Activated naive CD8-positive, alpha-beta T cell treated with anti-CD3 and anti-CD28 coated beads, Interleukin-2, amount 10 ng/mL, durations not matched to agents 7 days and 5 days (primary cell): ENCODE measurements at regions of chr1 and their contacts with region 1.

Region 1: DNA sequence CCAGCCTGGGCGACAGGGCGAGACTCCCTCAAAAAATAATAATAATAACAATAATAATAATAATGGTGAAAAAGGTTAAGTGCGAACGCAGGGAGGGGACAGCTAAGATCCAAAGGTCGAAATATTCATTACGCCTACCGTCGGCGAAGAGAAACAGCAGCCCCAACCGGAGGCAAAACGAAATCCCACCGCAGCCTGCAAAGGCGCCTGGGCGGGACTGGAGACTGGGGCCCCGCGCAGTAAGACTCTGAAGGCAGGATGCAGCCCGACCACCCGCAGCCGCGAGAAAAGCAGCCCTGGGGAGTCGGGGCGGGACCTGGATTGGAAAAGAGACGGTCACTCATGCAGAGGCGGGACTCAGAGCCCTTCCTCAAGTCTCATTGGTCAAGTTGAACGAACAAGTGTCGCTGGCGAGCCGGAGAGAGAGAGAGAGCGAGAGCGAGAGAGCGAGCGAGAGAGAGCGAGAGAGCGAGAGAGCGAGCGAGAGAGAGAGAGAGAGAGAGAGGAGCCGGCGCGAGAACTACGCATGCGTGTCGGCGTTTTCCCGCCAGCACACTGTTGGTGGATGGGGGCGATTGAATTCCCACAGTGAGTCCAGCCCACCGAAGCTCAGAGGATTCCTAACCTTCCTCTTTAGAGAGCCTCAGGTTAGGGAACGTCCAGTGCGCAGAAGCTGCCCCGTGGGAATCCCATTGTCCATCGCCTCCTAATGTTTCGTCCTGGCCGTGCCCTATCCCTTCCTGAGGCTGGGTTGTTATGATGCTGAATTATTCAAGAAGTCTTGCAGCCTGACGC is 10.7 kb downstream of the ENTREP3 start:
- DNase-seq: peak; percentile 96
- ATAC-seq: peak; percentile 97
- H3K4me3 Mint-ChIP-seq: peak overlapping the region; percentile 85
- H3K27ac Mint-ChIP-seq: peak overlapping the region; percentile 95
- H3K4me1 Mint-ChIP-seq: peaks cover 49% of the 10 kb centered on the region
- H3K27me3 Mint-ChIP-seq: no peaks in the 10 kb centered on the region

Region 2: DNA sequence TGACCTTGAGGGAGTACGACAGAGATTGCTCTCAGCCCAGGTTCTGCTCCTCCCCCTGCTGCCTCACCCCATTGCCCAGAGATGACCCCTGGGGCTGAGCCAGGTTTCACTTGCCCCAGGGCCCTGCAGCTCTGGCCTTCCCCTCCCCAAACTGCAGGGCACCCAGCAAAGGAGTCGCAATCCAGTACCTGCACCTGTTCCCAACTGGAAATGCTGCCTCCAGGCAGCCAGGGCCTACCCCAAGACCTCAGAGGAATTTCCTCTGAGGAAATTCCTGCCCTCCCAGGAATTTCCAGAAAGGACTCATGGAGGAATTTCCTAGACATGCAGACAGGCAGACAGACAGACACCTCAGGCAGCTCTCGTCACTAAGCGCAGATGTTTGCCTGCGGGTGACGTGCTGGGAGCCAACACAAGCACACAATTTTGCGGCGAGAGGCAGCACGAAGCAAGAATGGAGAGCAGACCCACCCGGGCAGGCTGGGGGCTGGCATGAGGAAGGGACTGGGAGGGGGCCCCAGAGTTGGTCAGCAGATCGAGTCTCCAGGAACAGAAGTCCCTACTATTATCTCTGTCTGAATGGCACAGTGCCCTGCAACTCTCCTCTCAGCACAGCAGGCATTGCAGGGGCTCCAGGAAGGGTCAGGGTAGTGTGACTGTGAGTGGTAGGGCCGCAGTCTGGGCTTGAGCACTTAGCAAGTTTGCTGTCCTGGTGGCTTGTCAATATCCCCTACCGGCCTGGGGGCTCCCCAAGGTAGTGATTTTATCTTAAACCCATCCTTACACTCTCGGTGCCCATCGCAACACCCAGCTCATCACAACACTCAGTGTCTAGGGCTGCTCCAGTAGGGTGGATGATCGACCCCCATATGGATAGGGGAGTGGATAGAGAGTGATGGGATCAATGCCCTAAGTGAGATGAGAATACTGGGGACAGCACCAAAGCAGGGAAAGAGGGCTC is 119.8 kb before region 1 on chr1:
- POLR2A ChIA-PET with region 1: no interaction called
- DNase-seq: no peak
- ATAC-seq: no peak
- H3K4me3 Mint-ChIP-seq: peak overlapping the region; percentile 4
- H3K27ac Mint-ChIP-seq: no peak overlapping the region
- H3K4me1 Mint-ChIP-seq: peaks cover 22% of the 10 kb centered on the region
- H3K27me3 Mint-ChIP-seq: peaks cover 51% of the 10 kb centered on the region

Region 3: GRCh38 chr1:155227261-155228095 is 17.1 kb before region 1 on chr1:
- POLR2A ChIA-PET with region 1: interaction called, 15 read pairs
- DNase-seq: peak; percentile 96
- ATAC-seq: peak; percentile 96
- H3K4me3 Mint-ChIP-seq: peak overlapping the region; percentile 95
- H3K27ac Mint-ChIP-seq: peak overlapping the region; percentile 92
- H3K4me1 Mint-ChIP-seq: peaks cover 24% of the 10 kb centered on the region
- H3K27me3 Mint-ChIP-seq: no peaks in the 10 kb centered on the region

Region 4: GRCh38 chr1:155591770-155592169 is 347.2 kb after region 1 on chr1:
- POLR2A ChIA-PET with region 1: no interaction called
- DNase-seq: no peak
- ATAC-seq: peak; percentile 71
- H3K4me3 Mint-ChIP-seq: no peak overlapping the region
- H3K27ac Mint-ChIP-seq: no peak overlapping the region
- H3K4me1 Mint-ChIP-seq: peaks cover 3% of the 10 kb centered on the region
- H3K27me3 Mint-ChIP-seq: no peaks in the 10 kb centered on the region